Naive thymus-derived CD4-positive, alpha-beta T cell (primary cell): ENCODE measurements at regions of chr5 and their contacts with region 1.

Region 1: DNA sequence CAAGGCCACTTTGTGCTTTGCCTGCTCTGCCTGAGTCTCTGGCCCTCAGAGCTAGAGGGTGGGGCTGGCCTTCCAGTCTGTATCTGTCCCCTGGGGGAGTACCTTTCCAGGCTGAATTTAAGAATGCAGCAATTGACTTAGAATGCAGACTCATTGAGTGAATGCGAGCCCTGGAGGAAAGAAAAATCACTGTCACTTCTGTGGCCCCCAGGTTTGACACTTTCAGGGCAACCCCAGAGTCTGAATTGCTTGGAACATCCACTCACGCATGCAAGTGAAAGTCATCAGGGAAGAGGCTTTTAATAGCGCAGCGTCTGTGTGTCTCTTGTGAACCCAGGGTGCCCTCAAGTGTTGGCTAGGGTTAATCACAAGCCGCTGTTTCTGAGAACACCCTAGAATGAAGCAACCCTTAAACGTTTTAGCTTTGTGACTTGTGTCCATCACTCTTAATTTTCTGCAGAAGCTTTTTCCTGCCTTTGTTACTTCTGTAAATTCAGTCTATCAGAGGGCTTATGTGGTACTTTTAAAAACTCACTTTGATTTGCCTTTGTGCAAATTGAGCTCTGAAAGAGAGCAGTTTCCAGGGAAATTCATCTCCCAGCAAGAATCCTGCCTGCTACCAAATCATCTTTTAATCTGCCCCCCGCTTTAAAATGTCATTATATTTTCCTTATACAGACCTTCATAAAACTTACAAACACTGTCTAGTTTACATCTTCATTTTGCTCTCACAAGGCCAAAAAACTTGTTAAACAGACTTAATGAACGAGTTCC is 146.8 kb upstream of the IQGAP2 start:
- DNase-seq: peak; percentile 20 to 70 (median 56)
- ATAC-seq: peak; percentile 96
- H3K4me3 ChIP-seq: no peak overlapping the region
- H3K4me3 Mint-ChIP-seq: peak overlapping the region in 4 of 10 donors; percentile 23 to 45 (median 42)
- H3K27ac ChIP-seq: no peak overlapping the region
- H3K27ac Mint-ChIP-seq: peak overlapping the region in 3 of 9 donors; percentile 8 to 23 (median 11)
- H3K4me1 ChIP-seq: no peaks in the 10 kb centered on the region
- H3K4me1 Mint-ChIP-seq: peaks cover 0 to 12% (median 3%) of the 10 kb centered on the region in 7 donors
- H3K27me3 ChIP-seq: no peaks in the 10 kb centered on the region
- H3K27me3 Mint-ChIP-seq: peaks cover 4 to 36% (median 4%) of the 10 kb centered on the region in 5 donors

Region 2: DNA sequence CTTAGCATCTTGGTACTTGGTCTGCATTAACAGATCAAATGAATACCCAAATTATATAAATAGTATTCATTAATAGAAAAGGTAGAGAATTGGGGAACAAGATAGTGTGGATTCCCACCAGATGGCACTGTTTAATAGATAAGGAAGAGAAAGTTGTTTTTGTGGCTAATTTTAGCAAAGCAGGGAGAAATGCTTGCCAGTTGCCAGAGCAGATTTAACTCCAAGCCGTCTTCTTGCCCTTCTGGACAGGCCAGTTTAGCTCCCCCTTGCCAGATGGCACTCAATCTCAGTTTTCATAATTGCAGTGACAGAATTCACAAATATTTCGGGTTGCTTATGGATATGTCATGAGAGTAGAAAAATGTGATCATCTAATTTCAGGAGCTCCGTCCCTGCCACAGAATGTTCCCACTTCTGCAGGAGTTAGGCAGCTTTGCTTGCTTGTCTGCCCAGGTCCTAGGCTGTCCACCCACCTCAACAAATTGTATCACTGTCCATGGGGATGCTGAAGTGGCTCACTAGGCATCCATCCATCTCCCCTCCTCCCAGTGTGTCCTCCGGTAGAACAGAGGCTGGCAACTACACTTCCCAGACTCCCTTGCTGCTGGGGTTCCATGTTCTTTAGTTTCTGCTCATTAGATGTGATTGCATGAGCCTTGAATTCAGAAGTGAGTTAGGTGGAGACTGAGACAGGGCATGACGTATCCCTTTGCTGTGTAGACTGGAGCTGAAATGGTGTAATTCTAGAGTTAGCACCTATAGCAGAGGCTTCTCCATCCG is 1583.1 kb before region 1 on chr5:
- CTCF ChIA-PET with region 1: no interaction called
- POLR2A ChIA-PET with region 1: no interaction called
- intact Hi-C with region 1: loop called in 1 of 2 experiments (anchors 2 kb)
- DNase-seq: peak in 5 of 9 donors; percentile 8 to 30 (median 21)
- ATAC-seq: no peak
- H3K4me3 ChIP-seq: no peak overlapping the region
- H3K4me3 Mint-ChIP-seq: no peak overlapping the region
- H3K27ac ChIP-seq: no peak overlapping the region
- H3K27ac Mint-ChIP-seq: no peak overlapping the region
- H3K4me1 ChIP-seq: no peaks in the 10 kb centered on the region
- H3K4me1 Mint-ChIP-seq: peaks cover 0 to 2% (median 0%) of the 10 kb centered on the region in 7 donors
- H3K27me3 ChIP-seq: no peaks in the 10 kb centered on the region
- H3K27me3 Mint-ChIP-seq: peaks cover 9 to 31% (median 15%) of the 10 kb centered on the region in 5 donors

Region 3: GRCh38 chr5:74934949-74935751 is 1321.2 kb before region 1 on chr5:
- CTCF ChIA-PET with region 1: no interaction called
- POLR2A ChIA-PET with region 1: no interaction called
- intact Hi-C with region 1: loop called in 1 of 2 experiments (anchors 5 kb)
- DNase-seq: peak in 8 of 9 donors; percentile 14 to 65 (median 44)
- ATAC-seq: peak; percentile 79
- H3K4me3 ChIP-seq: peak overlapping the region; percentile 34
- H3K4me3 Mint-ChIP-seq: peak overlapping the region; percentile 65 to 84 (median 76)
- H3K27ac ChIP-seq: peak overlapping the region; percentile 50
- H3K27ac Mint-ChIP-seq: peak overlapping the region; percentile 52 to 89 (median 85)
- H3K4me1 ChIP-seq: peaks cover 9 to 20% of the 10 kb centered on the region in 2 donors
- H3K4me1 Mint-ChIP-seq: peaks cover 13 to 50% (median 42%) of the 10 kb centered on the region in 7 donors
- H3K27me3 ChIP-seq: no peaks in the 10 kb centered on the region
- H3K27me3 Mint-ChIP-seq: peaks cover 0 to 6% (median 0%) of the 10 kb centered on the region in 5 donors

Region 4: GRCh38 chr5:75511435-75512384 is 744.6 kb before region 1 on chr5 and contains the starts of genes CERT1 and POLK:
- CTCF ChIA-PET with region 1: no interaction called
- POLR2A ChIA-PET with region 1: no interaction called
- intact Hi-C with region 1: loop called in 1 of 2 experiments (anchors 5 kb)
- DNase-seq: peak; percentile 70 to 94 (median 90)
- ATAC-seq: peak; percentile 95
- H3K4me3 ChIP-seq: peak within 1 kb of the TSS; percentile 78
- H3K4me3 Mint-ChIP-seq: peak within 1 kb of the TSS; percentile 89 to 97 (median 94)
- H3K27ac ChIP-seq: peak within 1 kb of the TSS; percentile 75
- H3K27ac Mint-ChIP-seq: peak within 1 kb of the TSS; percentile 84 to 98 (median 93)
- H3K4me1 ChIP-seq: peaks cover 14 to 28% of the 10 kb centered on the region in 2 donors
- H3K4me1 Mint-ChIP-seq: peaks cover 29 to 77% (median 54%) of the 10 kb centered on the region in 7 donors
- H3K27me3 ChIP-seq: no peaks in the 10 kb centered on the region
- H3K27me3 Mint-ChIP-seq: no peaks in the 10 kb centered on the region
- total RNA-seq, gene CERT1: 34.4 to 60.4 (median 39.3) TPM
- total RNA-seq, gene POLK: 20.6 to 36.6 (median 24.9) TPM

Region 5: GRCh38 chr5:75717082-75717922 is 539.0 kb before region 1 on chr5 and contains the start of gene POC5:
- CTCF ChIA-PET with region 1: no interaction called
- POLR2A ChIA-PET with region 1: no interaction called
- intact Hi-C with region 1: loop called in 1 of 2 experiments (anchors 10 kb)
- DNase-seq: peak; percentile 93 to 99 (median 98)
- ATAC-seq: peak; percentile 97
- H3K4me3 ChIP-seq: peak within 1 kb of the TSS; percentile 74
- H3K4me3 Mint-ChIP-seq: peak within 1 kb of the TSS; percentile 93 to 100 (median 99)
- H3K27ac ChIP-seq: peak within 1 kb of the TSS; percentile 78
- H3K27ac Mint-ChIP-seq: peak within 1 kb of the TSS; percentile 92 to 100 (median 97)
- H3K4me1 ChIP-seq: peaks cover 5 to 8% of the 10 kb centered on the region in 2 donors
- H3K4me1 Mint-ChIP-seq: peaks cover 26 to 47% (median 37%) of the 10 kb centered on the region in 7 donors
- H3K27me3 ChIP-seq: no peaks in the 10 kb centered on the region
- H3K27me3 Mint-ChIP-seq: peaks cover 0 to 10% (median 0%) of the 10 kb centered on the region in 5 donors
- total RNA-seq, gene POC5: 8.5 to 17.9 (median 15.0) TPM

Region 6: GRCh38 chr5:76016258-76016657 is 240.0 kb before region 1 on chr5:
- CTCF ChIA-PET with region 1: no interaction called
- POLR2A ChIA-PET with region 1: no interaction called
- intact Hi-C with region 1: loop called in 1 of 2 experiments (anchors 5 kb)
- DNase-seq: peak in 1 of 9 donors; percentile 11
- ATAC-seq: no peak
- H3K4me3 ChIP-seq: no peak overlapping the region
- H3K4me3 Mint-ChIP-seq: no peak overlapping the region
- H3K27ac ChIP-seq: no peak overlapping the region
- H3K27ac Mint-ChIP-seq: no peak overlapping the region
- H3K4me1 ChIP-seq: no peaks in the 10 kb centered on the region
- H3K4me1 Mint-ChIP-seq: peaks cover 0 to 3% (median 0%) of the 10 kb centered on the region in 7 donors
- H3K27me3 ChIP-seq: no peaks in the 10 kb centered on the region
- H3K27me3 Mint-ChIP-seq: peaks cover 26 to 47% (median 37%) of the 10 kb centered on the region in 5 donors

Region 7: GRCh38 chr5:76175051-76175666 is 81.1 kb before region 1 on chr5:
- CTCF ChIA-PET with region 1: no interaction called
- POLR2A ChIA-PET with region 1: no interaction called
- intact Hi-C with region 1: loop called (anchors 2 kb)
- DNase-seq: peak in 7 of 9 donors; percentile 12 to 34 (median 26)
- ATAC-seq: peak; percentile 75
- H3K4me3 ChIP-seq: no peak overlapping the region
- H3K4me3 Mint-ChIP-seq: peak overlapping the region in 7 of 10 donors; percentile 30 to 70 (median 52)
- H3K27ac ChIP-seq: no peak overlapping the region
- H3K27ac Mint-ChIP-seq: no peak overlapping the region
- H3K4me1 ChIP-seq: peaks cover 4 to 16% of the 10 kb centered on the region in 2 donors
- H3K4me1 Mint-ChIP-seq: peaks cover 15 to 20% (median 17%) of the 10 kb centered on the region in 7 donors
- H3K27me3 ChIP-seq: no peaks in the 10 kb centered on the region
- H3K27me3 Mint-ChIP-seq: peaks cover 0 to 6% (median 0%) of the 10 kb centered on the region in 5 donors